B cell (primary cell): ENCODE measurements at regions of chr4 and their contacts with region 1.

Region 1: DNA sequence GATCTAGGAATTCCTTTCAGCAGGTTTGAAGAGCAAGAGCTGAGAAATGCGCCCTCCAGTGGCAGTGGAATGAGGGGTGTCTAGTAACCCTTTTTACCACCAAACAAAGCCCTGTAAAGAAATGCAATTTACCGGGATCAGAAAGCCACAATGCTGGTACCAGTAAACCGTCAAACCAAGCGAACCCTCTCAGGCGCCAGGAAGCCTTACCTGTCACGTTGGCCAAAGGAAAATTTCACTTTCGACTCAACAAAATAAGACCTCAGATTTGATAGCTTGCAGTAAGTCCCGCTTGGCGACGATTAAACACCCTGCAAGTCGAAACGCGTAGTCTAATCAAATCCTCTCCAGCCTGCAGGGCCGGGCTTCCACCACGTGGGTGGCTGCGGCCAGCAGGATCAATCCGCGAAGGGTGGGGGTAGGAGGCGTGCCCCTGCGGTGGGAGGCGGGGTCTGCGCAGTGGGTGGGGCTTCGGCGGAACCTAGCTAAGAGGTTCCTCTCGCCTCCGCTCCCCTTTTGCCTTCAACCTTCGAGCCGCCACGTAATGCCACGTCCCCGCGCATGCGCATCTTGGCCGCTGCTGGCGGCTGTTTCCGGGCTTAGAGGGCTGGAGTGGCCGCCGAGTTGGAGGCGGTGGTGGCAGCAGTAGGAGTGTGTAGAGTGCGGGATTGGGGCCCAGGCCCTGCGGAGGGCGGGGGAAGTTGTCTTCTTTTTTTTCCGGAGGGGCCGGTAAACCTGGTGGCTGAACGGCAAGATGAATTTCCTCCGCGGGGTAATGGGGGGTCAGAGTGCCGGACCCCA is at the start of gene USO1:
- DNase-seq: peak; percentile 99
- ATAC-seq: peak; percentile 95
- H3K4me3 ChIP-seq: peak within 1 kb of the TSS; percentile 68 to 99 (median 90)
- H3K4me3 Mint-ChIP-seq: peak within 1 kb of the TSS; percentile 99
- H3K27ac ChIP-seq: peak within 1 kb of the TSS; percentile 90 to 91
- H3K27ac Mint-ChIP-seq: peak within 1 kb of the TSS; percentile 99
- H3K4me1 ChIP-seq: peaks cover 25 to 26% of the 10 kb centered on the region in 2 donors
- H3K4me1 Mint-ChIP-seq: peaks cover 56% of the 10 kb centered on the region
- H3K27me3 ChIP-seq: no peaks in the 10 kb centered on the region
- H3K27me3 Mint-ChIP-seq: no peaks in the 10 kb centered on the region
- CTCF ChIP-seq: peak; percentile 86
- total RNA-seq, gene USO1: 42.6 and 45.0 TPM in 2 replicates

Region 2: DNA sequence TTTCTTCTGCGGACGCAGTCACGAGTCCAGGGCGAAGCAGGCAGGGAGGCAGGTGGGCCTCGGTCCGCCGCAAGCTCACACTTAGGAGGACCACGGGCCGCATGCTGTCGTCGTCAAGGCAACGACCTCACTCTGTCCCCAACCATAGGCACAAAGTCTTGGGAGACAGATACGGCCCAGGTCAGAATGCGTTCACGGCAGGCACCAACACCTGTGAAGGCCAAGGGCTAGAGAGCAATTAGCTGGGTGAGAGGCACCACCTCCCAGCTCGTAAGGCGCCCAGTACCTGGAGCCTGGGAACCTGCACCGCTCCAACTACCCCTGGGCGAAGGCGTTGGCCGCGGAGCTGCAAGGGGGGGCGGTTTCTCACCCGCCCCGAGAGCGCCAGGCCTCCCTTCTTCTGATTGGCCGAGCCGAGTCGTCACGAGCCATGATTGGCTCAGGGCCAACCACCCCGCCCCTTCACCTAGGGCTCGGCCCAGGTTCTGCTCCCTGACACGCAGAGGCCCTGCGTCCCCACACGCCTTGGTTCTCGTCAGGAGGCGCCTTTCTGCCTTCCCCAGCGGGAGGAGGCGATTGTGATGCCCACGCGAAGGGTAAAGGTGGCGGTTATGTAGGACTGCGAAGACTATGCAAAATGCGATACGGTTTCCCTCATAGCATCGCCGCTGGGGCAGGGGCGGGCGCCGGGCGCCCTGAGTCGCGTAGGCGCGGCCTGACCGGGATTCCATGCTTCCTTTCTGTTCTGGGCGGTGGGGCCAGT is 93.9 kb before region 1 on chr4 and contains the start of gene CDKL2:
- CTCF ChIA-PET with region 1: interaction called, 10 read pairs
- POLR2A ChIA-PET with region 1: interaction called, 5 read pairs
- intact Hi-C with region 1: loop called (anchors 1 kb)
- DNase-seq: peak; percentile 93
- ATAC-seq: peak; percentile 100
- H3K4me3 ChIP-seq: peak within 1 kb of the TSS; percentile 45 to 84 (median 68)
- H3K4me3 Mint-ChIP-seq: peak within 1 kb of the TSS; percentile 95
- H3K27ac ChIP-seq: peak within 1 kb of the TSS in 1 of 2 donors; percentile 59
- H3K27ac Mint-ChIP-seq: peak within 1 kb of the TSS; percentile 71
- H3K4me1 ChIP-seq: peaks cover 4 to 14% of the 10 kb centered on the region in 2 donors
- H3K4me1 Mint-ChIP-seq: peaks cover 11% of the 10 kb centered on the region
- H3K27me3 ChIP-seq: no peaks in the 10 kb centered on the region
- H3K27me3 Mint-ChIP-seq: no peaks in the 10 kb centered on the region
- CTCF ChIP-seq: no peak
- total RNA-seq, gene CDKL2: 0.27 and 0.81 TPM in 2 replicates

Region 3: GRCh38 chr4:75653845-75654503 is 70.3 kb before region 1 on chr4:
- CTCF ChIA-PET with region 1: interaction called, 20 read pairs
- POLR2A ChIA-PET with region 1: interaction called, 4 read pairs
- intact Hi-C with region 1: loop called (anchors 1 kb)
- DNase-seq: peak; percentile 24
- ATAC-seq: no peak
- H3K4me3 ChIP-seq: no peak overlapping the region
- H3K4me3 Mint-ChIP-seq: no peak overlapping the region
- H3K27ac ChIP-seq: no peak overlapping the region
- H3K27ac Mint-ChIP-seq: peak overlapping the region; percentile 74
- H3K4me1 ChIP-seq: no peaks in the 10 kb centered on the region
- H3K4me1 Mint-ChIP-seq: peaks cover 30% of the 10 kb centered on the region
- H3K27me3 ChIP-seq: no peaks in the 10 kb centered on the region
- H3K27me3 Mint-ChIP-seq: no peaks in the 10 kb centered on the region
- CTCF ChIP-seq: peak; percentile 49

Region 4: DNA sequence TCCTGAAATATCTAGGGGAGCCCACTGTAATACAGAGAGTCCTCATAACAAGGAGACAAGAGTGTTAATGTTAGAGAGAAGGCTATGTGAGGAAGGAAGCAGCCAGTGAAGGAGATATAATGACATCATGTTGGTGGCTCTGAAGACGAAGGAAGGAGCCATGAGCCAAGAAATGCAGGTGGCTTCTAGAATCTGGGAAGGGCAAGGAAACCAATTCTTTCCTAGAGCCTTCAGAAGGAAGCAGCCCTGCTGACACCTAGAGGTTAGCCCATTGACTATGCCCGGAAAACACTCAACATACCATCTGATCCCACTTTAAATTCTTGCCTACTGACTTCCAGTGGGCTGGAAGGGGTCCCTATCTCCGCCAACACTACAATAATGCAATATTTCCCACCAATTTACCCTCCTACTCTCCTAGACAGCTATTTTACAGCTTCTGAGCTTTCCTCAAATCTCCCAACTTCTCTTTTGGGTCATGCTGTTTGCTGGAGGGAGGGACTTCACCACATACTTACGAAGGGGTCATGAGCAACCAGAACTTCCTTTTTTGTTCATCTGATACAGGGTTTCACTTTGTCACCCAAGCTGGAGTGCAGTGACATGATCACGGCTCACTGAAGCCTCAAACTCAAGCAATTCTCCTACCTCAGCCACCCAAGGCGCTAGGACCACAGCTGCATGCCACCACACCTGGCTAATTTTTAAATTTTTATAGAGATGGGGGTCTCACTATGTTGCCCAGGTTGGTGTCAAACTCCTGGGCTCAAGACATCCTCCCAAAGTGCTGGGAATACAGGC is 25.9 kb before region 1 on chr4:
- CTCF ChIA-PET with region 1: interaction called, 7 read pairs
- POLR2A ChIA-PET with region 1: interaction called, 4 read pairs
- intact Hi-C with region 1: loop called (anchors 1 kb)
- DNase-seq: peak; percentile 88
- ATAC-seq: peak; percentile 97
- H3K4me3 ChIP-seq: peak overlapping the region in 2 of 5 experiments; percentile 22 to 35
- H3K4me3 Mint-ChIP-seq: peak overlapping the region; percentile 35
- H3K27ac ChIP-seq: peak overlapping the region; percentile 95 to 97
- H3K27ac Mint-ChIP-seq: peak overlapping the region; percentile 83
- H3K4me1 ChIP-seq: peaks cover 23 to 31% of the 10 kb centered on the region in 2 donors
- H3K4me1 Mint-ChIP-seq: peaks cover 34% of the 10 kb centered on the region
- H3K27me3 ChIP-seq: no peaks in the 10 kb centered on the region
- H3K27me3 Mint-ChIP-seq: no peaks in the 10 kb centered on the region
- CTCF ChIP-seq: no peak

Region 5: DNA sequence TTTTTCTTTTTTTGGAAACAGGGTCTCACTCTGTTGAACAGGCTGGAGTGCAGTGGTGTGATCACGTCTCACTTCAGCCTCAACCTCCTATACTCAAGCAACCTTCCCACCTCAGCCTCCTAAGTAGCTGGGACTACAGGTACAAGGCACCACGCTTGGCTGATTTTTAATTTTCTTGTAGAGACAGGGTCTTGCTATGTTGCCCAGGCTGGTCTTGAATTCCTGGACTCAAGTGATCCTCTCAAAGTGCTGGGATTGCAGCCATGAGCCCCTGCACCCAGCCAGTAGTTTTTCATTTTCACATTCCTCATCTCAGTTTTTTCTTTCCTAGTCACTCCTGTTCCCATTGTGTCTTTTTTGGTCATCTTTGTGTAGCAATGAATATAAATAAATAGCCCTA is 11.3 kb after region 1 on chr4:
- CTCF ChIA-PET with region 1: no interaction called
- POLR2A ChIA-PET with region 1: no interaction called
- intact Hi-C with region 1: no loop called
- DNase-seq: no peak
- ATAC-seq: no peak
- H3K4me3 ChIP-seq: no peak overlapping the region
- H3K4me3 Mint-ChIP-seq: no peak overlapping the region
- H3K27ac ChIP-seq: no peak overlapping the region
- H3K27ac Mint-ChIP-seq: no peak overlapping the region
- H3K4me1 ChIP-seq: no peaks in the 10 kb centered on the region
- H3K4me1 Mint-ChIP-seq: peaks cover 28% of the 10 kb centered on the region
- H3K27me3 ChIP-seq: no peaks in the 10 kb centered on the region
- H3K27me3 Mint-ChIP-seq: no peaks in the 10 kb centered on the region
- CTCF ChIP-seq: no peak

Region 6: GRCh38 chr4:76213415-76214176 is 489.3 kb after region 1 on chr4 and contains the start of gene SCARB2:
- CTCF ChIA-PET with region 1: no interaction called
- POLR2A ChIA-PET with region 1: no interaction called
- intact Hi-C with region 1: loop called (anchors 2 kb)
- DNase-seq: peak; percentile 91
- ATAC-seq: peak; percentile 79
- H3K4me3 ChIP-seq: peak within 1 kb of the TSS; percentile 54 to 87 (median 71)
- H3K4me3 Mint-ChIP-seq: peak within 1 kb of the TSS; percentile 89
- H3K27ac ChIP-seq: peak within 1 kb of the TSS; percentile 85 to 86
- H3K27ac Mint-ChIP-seq: peak within 1 kb of the TSS; percentile 96
- H3K4me1 ChIP-seq: peaks cover 47 to 49% of the 10 kb centered on the region in 2 donors
- H3K4me1 Mint-ChIP-seq: peaks cover 47% of the 10 kb centered on the region
- H3K27me3 ChIP-seq: no peaks in the 10 kb centered on the region
- H3K27me3 Mint-ChIP-seq: no peaks in the 10 kb centered on the region
- CTCF ChIP-seq: no peak
- total RNA-seq, gene SCARB2: 30.3 and 31.5 TPM in 2 replicates